Heart right ventricle (tissue), 16 donors: ENCODE measurements at regions of chr16 and their contacts with region 1.

Region 1: DNA sequence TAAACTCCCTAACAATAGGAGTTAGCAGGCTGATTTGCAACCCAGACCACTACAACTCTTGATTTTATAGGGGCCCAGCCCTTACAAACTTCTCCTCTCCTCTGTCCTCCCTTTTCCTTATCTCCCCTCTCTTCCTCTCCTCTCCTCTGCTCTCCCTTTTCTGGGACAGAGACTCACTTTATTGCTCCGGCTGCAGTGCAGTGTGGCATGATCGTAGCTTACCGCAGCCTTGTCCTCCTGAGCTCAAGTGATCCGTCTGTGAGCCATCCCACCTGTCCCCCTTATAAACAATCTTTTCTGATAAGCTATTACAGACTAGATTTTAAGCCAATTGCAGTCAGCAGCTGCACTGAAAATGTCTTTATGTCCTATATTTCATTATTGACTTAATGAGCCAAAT is 418.9 kb downstream of the CDH8 start:
- DNase-seq: no peak
- ATAC-seq: no peak
- H3K4me3 ChIP-seq: no peak overlapping the region
- H3K27ac ChIP-seq: no peak overlapping the region
- H3K4me1 ChIP-seq: no peaks in the 10 kb centered on the region
- H3K27me3 ChIP-seq: no peaks in the 10 kb centered on the region
- CTCF ChIP-seq: no peak

Region 2: DNA sequence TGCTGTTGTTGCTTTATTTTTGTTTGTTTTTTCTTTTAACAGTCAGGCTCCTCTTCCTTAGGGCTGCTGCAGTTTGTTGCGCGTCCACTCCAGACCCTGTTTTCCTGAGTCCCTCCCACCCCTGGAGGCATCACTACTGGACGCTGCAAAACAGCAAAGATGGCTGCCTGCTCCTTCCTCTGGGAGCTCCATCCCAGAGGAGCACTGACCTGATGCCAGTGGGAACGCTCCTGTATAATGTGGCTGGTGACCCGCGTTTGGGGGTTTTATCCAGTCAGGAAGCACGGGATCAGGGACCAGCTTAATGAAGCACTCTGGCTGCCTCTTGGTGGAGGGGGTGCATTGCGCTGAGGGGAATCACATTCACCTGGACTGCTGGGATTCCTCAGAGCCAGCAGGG is 586.8 kb before region 1 on chr16:
- intact Hi-C with region 1: loop called in 1 of 10 experiments (anchors 10 kb)
- DNase-seq: no peak
- ATAC-seq: no peak
- H3K4me3 ChIP-seq: no peak overlapping the region
- H3K27ac ChIP-seq: no peak overlapping the region
- H3K4me1 ChIP-seq: no peaks in the 10 kb centered on the region
- H3K27me3 ChIP-seq: no peaks in the 10 kb centered on the region
- CTCF ChIP-seq: no peak

Region 3: DNA sequence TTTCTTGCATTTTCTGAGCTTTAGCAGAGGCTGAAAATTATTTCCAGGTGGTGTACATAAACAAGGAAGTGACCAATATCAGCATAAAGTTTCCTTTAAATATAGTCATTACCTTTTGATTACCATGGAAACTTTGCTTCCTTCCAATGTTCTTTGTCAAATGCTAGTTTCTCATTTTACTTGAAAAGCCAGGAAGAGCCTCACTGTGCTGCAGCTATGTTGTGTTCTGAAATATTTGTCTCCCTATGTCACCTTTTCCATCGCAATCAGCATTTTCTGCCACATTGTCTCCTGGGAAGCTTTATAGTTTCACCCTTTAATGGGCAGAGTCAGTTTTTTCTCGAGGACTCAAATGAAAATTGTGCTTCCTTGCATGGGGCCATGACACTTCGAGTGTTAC is 77.2 kb before region 1 on chr16:
- intact Hi-C with region 1: no loop called
- DNase-seq: no peak
- ATAC-seq: no peak
- H3K4me3 ChIP-seq: no peak overlapping the region
- H3K27ac ChIP-seq: no peak overlapping the region
- H3K4me1 ChIP-seq: no peaks in the 10 kb centered on the region
- H3K27me3 ChIP-seq: no peaks in the 10 kb centered on the region
- CTCF ChIP-seq: no peak